Activated CD8-positive, alpha-beta memory T cell treated with anti-CD3 and anti-CD28 coated beads, Interleukin-2, amount 10 ng/mL, durations not matched to agents 7 days and 5 days (primary cell): ENCODE measurements at regions of chr11 and their contacts with region 1.

Region 1: GRCh38 chr11:75351791-75352587 is 528 bp upstream of the ARRB1 start:
- DNase-seq: peak; percentile 76
- ATAC-seq: peak; percentile 72
- H3K4me3 Mint-ChIP-seq: peak overlapping the region; percentile 74
- H3K27ac Mint-ChIP-seq: peak overlapping the region; percentile 86
- H3K4me1 Mint-ChIP-seq: peaks cover 48% of the 10 kb centered on the region
- H3K27me3 Mint-ChIP-seq: no peaks in the 10 kb centered on the region

Region 2: DNA sequence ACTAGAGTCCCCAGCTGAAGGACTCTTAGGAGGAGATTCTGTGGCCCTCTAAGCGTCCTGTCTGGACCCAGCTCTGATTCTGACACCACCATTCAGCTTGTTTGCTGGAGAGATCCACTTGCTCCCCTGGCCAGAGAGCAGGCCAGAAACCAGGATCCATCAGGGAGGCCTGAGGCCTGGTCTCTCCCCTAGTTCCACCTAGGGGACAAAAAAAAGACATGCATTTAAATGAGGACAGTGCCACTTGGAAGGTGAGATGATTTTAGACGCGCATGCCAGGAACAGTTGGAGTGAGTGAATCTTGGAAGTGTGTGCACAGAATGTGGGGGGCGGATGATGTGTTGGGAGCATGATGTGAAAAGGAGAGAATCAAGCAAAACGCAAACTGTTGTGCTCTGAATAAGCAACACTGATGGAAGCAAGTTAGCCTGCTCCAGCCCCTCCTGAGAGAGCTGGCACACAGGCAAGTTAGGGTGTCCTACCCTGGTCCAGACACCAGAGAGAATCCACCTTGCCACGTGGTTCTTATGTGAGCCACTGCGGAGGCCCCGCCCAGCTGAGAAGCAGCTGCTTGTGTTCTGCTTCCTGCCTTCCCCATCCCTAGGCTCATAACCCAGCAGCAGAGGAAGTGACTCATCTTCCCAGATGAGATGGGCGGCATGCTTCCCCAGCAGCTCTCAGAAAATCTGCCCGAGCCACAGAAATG is 209.1 kb before region 1 on chr11:
- CTCF ChIA-PET with region 1: no interaction called
- DNase-seq: peak; percentile 92
- ATAC-seq: peak; percentile 90
- H3K4me3 Mint-ChIP-seq: peak overlapping the region; percentile 22
- H3K27ac Mint-ChIP-seq: peak overlapping the region; percentile 76
- H3K4me1 Mint-ChIP-seq: peaks cover 54% of the 10 kb centered on the region
- H3K27me3 Mint-ChIP-seq: peaks cover 35% of the 10 kb centered on the region

Region 3: GRCh38 chr11:75328426-75329277 is 23.3 kb before region 1 on chr11:
- CTCF ChIA-PET with region 1: interaction called, 13 read pairs
- DNase-seq: peak; percentile 88
- ATAC-seq: peak; percentile 93
- H3K4me3 Mint-ChIP-seq: peak overlapping the region; percentile 32
- H3K27ac Mint-ChIP-seq: peak overlapping the region; percentile 86
- H3K4me1 Mint-ChIP-seq: peaks cover 39% of the 10 kb centered on the region
- H3K27me3 Mint-ChIP-seq: no peaks in the 10 kb centered on the region

Region 4: DNA sequence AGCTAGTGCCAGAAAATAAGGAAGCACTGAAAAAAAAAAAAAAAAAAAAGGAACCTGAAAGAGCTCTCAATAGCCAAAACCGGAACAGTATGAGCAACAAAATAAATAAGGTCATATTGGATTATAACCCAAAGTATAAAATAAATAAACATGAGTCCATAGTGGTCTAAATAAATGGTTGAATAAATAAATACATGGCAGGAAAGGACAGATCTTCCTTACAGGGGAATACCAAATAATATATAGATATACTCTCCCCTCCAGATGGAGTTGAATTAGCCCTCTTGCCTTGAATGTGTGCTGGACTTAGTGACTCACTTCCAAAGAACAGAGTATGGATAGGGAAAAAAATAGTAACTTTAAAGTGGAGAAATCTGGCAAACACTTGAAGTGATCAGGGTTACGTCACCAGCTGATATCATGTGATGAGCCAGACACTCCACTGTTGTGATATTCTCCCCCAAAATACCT is 13.8 kb after region 1 on chr11:
- CTCF ChIA-PET with region 1: interaction called, 14 read pairs
- DNase-seq: no peak
- ATAC-seq: no peak
- H3K4me3 Mint-ChIP-seq: no peak overlapping the region
- H3K27ac Mint-ChIP-seq: no peak overlapping the region
- H3K4me1 Mint-ChIP-seq: peaks cover 25% of the 10 kb centered on the region
- H3K27me3 Mint-ChIP-seq: no peaks in the 10 kb centered on the region